Endothelial cell of umbilical vein (primary cell): ENCODE measurements at regions of chrX and their contacts with region 1.

Region 1: GRCh38 chrX:39808471-39808917 is 289.3 kb downstream of the BCOR start:
- DNase-seq: peak; percentile 74
- H3K4me3 ChIP-seq: no peak overlapping the region
- H3K27ac ChIP-seq: peak overlapping the region; percentile 92
- H3K4me1 ChIP-seq: peaks cover 25% of the 10 kb centered on the region
- H3K27me3 ChIP-seq: no peaks in the 10 kb centered on the region
- CTCF ChIP-seq: no peak
- POLR2A ChIP-seq: no peak

Region 2: DNA sequence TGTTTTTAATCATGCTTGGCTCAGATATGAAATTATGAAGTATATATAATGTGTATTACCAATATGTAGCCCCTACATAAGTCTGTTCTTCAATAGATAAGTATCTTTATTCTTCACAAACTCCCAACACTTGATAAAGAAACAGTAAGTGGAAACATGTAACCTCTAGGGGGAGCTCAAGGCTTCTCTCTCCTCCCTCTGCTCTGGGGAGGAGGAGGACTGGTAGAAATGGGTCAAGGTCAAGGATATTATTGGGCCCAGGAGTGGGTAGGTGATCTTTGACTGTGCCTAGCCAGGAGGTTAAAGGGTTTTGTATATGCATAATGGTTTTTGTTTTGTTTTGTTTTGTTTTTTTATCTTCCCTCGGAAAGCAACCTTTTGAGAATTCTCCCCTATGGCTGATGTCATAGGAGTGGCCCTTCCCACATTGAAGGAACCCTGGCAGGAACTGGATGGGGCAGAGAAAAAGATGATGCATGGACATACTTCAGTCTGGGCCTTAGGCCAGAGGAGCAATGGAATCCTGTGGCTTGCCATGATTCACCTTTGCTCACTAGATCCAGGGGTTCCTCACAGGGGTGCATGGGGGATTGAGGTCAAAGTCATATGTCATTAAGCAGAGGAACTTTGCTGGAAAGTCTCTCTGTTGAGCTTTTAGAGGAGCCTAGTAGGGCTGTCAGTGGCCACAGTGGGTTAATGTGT is 546.9 kb before region 1 on chrX:
- CTCF ChIA-PET with region 1: no interaction called
- POLR2A ChIA-PET with region 1: no interaction called
- dilution Hi-C with region 1: no loop called
- intact Hi-C with region 1: loop called (anchors 5 kb)
- DNase-seq: peak; percentile 53
- H3K4me3 ChIP-seq: no peak overlapping the region
- H3K27ac ChIP-seq: no peak overlapping the region
- H3K4me1 ChIP-seq: no peaks in the 10 kb centered on the region
- H3K27me3 ChIP-seq: no peaks in the 10 kb centered on the region
- CTCF ChIP-seq: peak; percentile 34 to 44
- POLR2A ChIP-seq: no peak

Region 3: DNA sequence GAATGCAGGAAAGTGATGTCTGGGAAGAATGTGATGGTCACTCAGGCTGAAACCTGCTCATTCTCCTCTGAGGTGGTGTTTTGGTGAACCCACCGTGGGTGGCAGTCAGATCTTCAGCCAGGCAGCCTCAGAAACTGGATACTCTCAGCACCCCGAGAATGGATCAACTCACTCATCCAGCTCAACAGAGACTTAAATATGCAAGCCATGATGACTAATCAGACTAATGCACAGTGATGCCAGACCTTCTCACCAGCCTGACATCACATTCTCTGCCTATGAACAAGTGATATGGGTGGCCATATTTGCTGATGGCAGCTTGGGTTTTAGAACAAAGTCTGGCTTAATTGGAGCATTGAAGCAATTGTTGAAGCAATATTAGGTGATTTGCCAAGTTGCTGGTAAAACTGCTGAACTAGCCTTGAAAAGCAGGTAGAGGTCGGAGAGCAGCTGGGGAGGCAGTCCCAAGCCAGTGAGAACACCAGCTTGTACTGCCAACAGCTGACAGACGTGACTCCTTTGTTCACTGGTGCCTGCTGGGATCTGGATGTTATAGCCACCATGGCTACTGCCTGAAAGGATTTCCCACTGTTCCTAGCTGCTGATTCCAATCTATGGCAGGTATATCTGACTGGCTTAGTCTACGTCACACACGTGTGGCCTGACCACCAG is 399.1 kb before region 1 on chrX:
- CTCF ChIA-PET with region 1: no interaction called
- POLR2A ChIA-PET with region 1: no interaction called
- dilution Hi-C with region 1: no loop called
- intact Hi-C with region 1: no loop called
- DNase-seq: no peak
- H3K4me3 ChIP-seq: no peak overlapping the region
- H3K27ac ChIP-seq: no peak overlapping the region
- H3K4me1 ChIP-seq: no peaks in the 10 kb centered on the region
- H3K27me3 ChIP-seq: no peaks in the 10 kb centered on the region
- CTCF ChIP-seq: no peak
- POLR2A ChIP-seq: no peak

Region 4: DNA sequence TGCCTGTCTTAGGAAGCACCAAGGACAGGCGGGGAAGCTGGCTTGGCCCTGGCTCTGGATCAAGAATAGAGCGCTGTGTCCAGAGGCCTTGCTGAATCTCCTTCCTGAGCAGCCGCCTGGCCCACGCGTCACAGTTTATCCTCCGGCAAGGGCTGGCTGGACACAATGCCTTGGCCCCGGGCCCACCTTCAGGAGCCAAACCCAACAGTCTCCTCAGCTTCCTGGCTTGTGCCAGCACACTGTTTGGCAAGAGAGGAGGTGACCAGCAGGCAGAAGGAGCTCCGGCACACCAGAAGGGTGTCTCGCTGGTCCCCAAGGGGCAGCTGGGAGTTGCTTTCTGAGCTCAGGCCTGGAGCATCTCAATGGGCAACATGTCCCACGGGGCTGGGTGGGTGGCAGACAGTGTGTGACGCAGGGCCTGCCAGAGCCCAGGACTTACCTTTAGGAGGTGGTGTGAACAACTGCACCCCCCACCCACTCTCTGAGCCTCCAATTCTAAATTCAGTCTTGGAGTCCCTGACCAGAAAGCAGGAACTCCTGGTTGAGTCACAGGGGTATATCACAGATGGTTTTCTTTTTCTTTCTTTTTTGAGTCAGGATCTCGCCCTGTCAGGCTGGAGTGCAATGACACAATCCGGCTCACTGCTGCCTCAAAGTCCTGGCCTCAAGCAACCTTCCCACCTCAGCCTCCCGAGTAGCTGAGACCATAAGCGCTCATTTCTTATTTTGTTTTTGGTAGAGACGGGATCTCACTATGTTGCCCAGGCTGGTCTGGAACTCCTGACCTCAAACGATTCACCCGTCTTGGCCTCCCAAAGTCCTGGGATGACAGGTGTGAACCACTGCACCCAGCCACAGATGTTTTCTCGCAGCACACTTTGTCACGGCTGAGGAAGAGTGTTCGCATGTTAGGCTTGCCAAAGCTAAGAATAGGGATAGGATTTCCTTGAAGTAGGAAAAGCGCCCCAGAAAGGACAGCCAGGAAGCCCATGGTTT is 72.0 kb before region 1 on chrX:
- CTCF ChIA-PET with region 1: interaction called, 4 read pairs
- POLR2A ChIA-PET with region 1: no interaction called
- dilution Hi-C with region 1: no loop called
- intact Hi-C with region 1: loop called (anchors 1 kb)
- DNase-seq: peak; percentile 94
- H3K4me3 ChIP-seq: no peak overlapping the region
- H3K27ac ChIP-seq: peak overlapping the region; percentile 92
- H3K4me1 ChIP-seq: peaks cover 15% of the 10 kb centered on the region
- H3K27me3 ChIP-seq: no peaks in the 10 kb centered on the region
- CTCF ChIP-seq: no peak
- POLR2A ChIP-seq: peak; percentile 60

Region 5: DNA sequence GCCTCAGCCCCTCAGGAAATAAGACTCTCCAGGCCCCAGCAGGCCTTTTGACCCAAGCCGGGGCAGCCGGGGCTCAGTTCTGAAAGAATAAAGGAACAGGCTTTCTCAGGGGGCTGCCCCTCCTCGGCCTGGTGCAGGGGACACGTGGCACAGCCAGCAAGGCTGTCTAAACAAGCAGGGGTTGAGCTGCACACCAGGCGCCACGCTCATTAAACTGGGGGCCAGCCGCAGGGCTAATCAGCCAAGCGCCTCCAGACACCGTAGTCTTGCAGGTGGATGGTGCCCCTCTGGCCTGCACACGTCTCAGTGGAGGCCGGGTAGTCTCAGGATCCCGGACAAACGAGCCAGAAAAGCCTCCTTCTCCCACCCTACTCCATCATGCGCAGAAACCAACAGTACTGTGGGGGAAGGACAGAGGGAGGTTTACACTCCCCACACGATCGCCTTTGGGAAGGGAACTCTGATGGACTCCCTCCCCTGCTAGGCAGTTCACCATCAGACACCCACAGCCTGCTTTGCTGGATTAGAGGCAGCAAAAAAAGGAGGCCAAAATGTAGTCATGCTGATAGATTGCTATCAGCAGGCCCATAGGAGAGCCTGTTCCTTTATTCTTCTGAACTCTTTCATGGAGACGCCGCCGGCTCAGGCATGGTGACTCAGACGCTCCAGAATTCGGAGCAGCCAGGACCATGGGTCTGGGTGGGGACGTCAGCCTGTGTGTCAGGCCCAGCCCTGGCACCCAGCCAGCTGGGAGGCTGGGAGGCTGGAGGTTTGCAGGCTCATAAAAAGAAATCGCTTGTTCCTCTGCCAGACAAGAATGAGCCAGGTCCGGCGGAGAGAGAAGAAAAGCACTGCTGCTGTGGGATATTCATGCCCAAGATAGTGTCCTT is 53.1 kb before region 1 on chrX:
- CTCF ChIA-PET with region 1: interaction called, 7 read pairs
- POLR2A ChIA-PET with region 1: no interaction called
- dilution Hi-C with region 1: no loop called
- intact Hi-C with region 1: loop called (anchors 1 kb)
- DNase-seq: peak; percentile 92
- H3K4me3 ChIP-seq: no peak overlapping the region
- H3K27ac ChIP-seq: peak overlapping the region; percentile 95
- H3K4me1 ChIP-seq: peaks cover 64% of the 10 kb centered on the region
- H3K27me3 ChIP-seq: no peaks in the 10 kb centered on the region
- CTCF ChIP-seq: no peak
- POLR2A ChIP-seq: no peak

Region 6: GRCh38 chrX:39773923-39774773 is 34.3 kb before region 1 on chrX:
- CTCF ChIA-PET with region 1: no interaction called
- POLR2A ChIA-PET with region 1: no interaction called
- dilution Hi-C with region 1: no loop called
- intact Hi-C with region 1: loop called (anchors 2 kb)
- DNase-seq: peak; percentile 53
- H3K4me3 ChIP-seq: no peak overlapping the region
- H3K27ac ChIP-seq: no peak overlapping the region
- H3K4me1 ChIP-seq: peaks cover 4% of the 10 kb centered on the region
- H3K27me3 ChIP-seq: no peaks in the 10 kb centered on the region
- CTCF ChIP-seq: no peak
- POLR2A ChIP-seq: no peak

Region 7: GRCh38 chrX:40153335-40154249 is 345.1 kb after region 1 on chrX:
- CTCF ChIA-PET with region 1: interaction called, 3 read pairs
- POLR2A ChIA-PET with region 1: no interaction called
- dilution Hi-C with region 1: no loop called
- intact Hi-C with region 1: loop called (anchors 2 kb)
- DNase-seq: no peak
- H3K4me3 ChIP-seq: peak overlapping the region; percentile 7 to 38 (median 15)
- H3K27ac ChIP-seq: peak overlapping the region; percentile 12
- H3K4me1 ChIP-seq: peaks cover 32% of the 10 kb centered on the region
- H3K27me3 ChIP-seq: no peaks in the 10 kb centered on the region
- CTCF ChIP-seq: no peak
- POLR2A ChIP-seq: no peak